ENCODE measurements at regions of chr14 and their contacts with region 1.

Region 1: DNA sequence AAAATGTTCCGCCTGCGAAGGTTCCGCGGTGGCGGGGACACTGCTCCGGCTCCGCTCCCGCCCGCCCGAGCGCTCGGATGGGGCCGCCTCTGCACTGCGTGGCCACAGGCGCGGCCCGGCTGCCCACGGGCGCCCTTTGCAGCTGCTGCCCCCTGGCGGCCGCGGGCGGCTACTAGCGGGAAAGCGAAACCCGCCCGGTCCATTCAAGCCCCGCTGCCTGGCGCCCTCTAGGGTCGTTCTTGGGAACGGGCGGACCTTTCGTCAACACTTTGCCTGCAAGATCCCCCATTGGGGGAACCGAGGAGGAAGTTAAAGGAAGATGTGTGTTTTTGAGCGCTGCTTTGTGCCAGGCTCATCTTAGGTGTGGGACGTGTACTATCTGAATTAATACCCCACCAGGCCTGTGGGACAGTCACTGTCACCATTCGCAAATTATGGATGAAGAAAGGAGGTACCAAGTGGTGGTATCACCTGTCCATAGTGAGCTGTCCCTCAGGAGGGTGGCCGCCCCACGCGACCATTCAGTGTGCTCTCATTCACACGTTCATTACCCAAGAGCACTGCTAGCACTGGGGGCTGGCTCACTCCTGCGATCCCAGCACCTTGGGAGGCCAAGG is 19.4 kb downstream of the GPR132 start:
- DNase-seq: peak; percentile 89 to 96 (median 96)
- ATAC-seq: peak; percentile 88 to 91
- H3K4me3 ChIP-seq: no peak overlapping the region
- H3K27ac ChIP-seq: no peak overlapping the region
- H3K4me1 ChIP-seq: no peaks in the 10 kb centered on the region
- H3K27me3 ChIP-seq: no peaks in the 10 kb centered on the region

Region 2: GRCh38 chr14:104895786-104896661 is 149.8 kb before region 1 on chr14:
- intact Hi-C with region 1: loop called (anchors 2 to 10 kb)
- DNase-seq: peak; percentile 42 to 75 (median 72)
- ATAC-seq: peak; percentile 7 to 21
- H3K4me3 ChIP-seq: no peak overlapping the region
- H3K27ac ChIP-seq: no peak overlapping the region
- H3K4me1 ChIP-seq: no peaks in the 10 kb centered on the region
- H3K27me3 ChIP-seq: no peaks in the 10 kb centered on the region

Region 3: GRCh38 chr14:104976198-104977007 is 69.4 kb before region 1 on chr14:
- intact Hi-C with region 1: loop called in 3 of 4 experiments (anchors 1 to 5 kb)
- DNase-seq: peak; percentile 84 to 94 (median 92)
- ATAC-seq: peak; percentile 38 to 49
- H3K4me3 ChIP-seq: no peak overlapping the region
- H3K27ac ChIP-seq: no peak overlapping the region
- H3K4me1 ChIP-seq: peaks cover 10% of the 10 kb centered on the region
- H3K27me3 ChIP-seq: no peaks in the 10 kb centered on the region

Measured in right cardiac atrium (tissue), 5 donors.